ENCODE measurements at regions of chr7 and their contacts with region 1.

Region 1: DNA sequence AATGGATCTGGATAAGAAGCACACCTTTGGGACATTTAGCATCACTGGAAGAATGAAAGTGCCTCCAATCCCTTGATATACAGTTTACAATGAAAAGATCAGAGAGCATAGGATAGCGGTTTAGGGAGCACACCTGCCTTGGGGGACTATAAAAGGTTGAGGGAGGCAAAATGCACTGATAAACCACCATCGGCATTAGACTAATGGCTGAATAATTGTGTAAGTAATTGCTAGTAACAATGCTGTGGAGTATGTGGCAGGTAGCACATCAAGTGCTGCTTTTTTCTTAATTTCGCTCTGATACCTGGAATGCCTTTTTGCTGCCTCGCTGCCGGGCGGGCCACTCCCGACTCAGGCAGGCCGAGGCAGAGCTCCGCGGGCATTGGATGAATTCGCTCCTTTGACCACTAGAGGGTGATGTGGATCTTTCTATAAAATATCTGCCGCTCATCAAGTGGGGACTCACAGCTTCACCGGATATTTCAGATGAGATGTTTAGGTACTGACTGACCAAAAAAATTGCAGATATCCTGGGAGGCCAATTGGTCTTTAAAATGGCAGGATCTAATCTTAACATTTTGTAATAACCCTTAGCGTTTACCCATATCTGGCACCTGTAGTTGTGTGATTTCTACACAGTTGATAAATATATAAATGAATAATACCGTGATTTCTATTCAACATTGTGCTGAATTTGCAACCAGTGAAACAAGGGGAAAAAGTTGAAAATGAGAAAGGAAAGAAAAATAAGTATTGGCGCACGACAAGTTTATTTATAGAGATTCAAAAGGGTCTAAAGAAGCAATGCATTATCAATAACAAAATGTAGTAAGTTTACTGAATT is 116.8 kb upstream of the PRSS1 start:
- DNase-seq: peak; percentile 71
- ATAC-seq: peak; percentile 98
- H3K4me3 Mint-ChIP-seq: no peak overlapping the region
- H3K27ac Mint-ChIP-seq: no peak overlapping the region
- H3K4me1 Mint-ChIP-seq: peaks cover 2% of the 10 kb centered on the region; the same call in 1 of the 2 replicates
- H3K27me3 Mint-ChIP-seq: peaks cover 13% of the 10 kb centered on the region
- CTCF ChIP-seq: peak; percentile 63

Region 2: DNA sequence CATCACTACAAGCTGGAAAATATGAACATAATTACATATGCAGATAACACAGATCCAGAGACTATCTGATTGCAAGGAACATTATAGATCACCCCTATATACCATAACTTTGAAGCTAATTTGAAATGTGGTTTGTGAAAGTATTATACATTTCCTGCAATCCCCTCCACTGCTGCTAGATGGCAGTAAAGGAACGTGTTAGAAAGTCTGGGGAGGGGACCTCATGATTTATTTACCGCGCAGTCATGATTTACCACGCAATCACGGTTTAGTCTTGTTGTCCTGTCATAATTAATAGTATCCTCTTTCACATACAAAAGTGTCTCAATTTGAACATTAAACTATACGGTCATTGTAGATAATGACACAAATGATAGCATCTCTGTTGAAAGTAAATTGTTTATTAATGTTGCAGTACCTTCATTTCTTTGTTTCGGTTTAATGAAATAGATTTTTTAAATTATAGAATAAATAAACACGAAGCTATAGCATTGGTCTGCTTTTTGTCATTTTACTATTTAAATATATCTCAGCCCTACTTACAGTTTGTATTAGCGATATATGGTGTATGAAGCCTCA is 28.6 kb before region 1 on chr7:
- CTCF ChIA-PET with region 1: interaction called, 13 read pairs
- POLR2A ChIA-PET with region 1: no interaction called
- DNase-seq: peak; percentile 60
- ATAC-seq: peak; percentile 55
- H3K4me3 Mint-ChIP-seq: no peak overlapping the region
- H3K27ac Mint-ChIP-seq: no peak overlapping the region
- H3K4me1 Mint-ChIP-seq: 0 out of 2 replicates have a peak, but pooled peaks cover 2% of the 10 kb centered on the region
- H3K27me3 Mint-ChIP-seq: no peaks in the 10 kb centered on the region; the same call in 1 of the 2 replicates
- CTCF ChIP-seq: peak; percentile 42; the same call in 1 of the 2 replicates

Region 3: DNA sequence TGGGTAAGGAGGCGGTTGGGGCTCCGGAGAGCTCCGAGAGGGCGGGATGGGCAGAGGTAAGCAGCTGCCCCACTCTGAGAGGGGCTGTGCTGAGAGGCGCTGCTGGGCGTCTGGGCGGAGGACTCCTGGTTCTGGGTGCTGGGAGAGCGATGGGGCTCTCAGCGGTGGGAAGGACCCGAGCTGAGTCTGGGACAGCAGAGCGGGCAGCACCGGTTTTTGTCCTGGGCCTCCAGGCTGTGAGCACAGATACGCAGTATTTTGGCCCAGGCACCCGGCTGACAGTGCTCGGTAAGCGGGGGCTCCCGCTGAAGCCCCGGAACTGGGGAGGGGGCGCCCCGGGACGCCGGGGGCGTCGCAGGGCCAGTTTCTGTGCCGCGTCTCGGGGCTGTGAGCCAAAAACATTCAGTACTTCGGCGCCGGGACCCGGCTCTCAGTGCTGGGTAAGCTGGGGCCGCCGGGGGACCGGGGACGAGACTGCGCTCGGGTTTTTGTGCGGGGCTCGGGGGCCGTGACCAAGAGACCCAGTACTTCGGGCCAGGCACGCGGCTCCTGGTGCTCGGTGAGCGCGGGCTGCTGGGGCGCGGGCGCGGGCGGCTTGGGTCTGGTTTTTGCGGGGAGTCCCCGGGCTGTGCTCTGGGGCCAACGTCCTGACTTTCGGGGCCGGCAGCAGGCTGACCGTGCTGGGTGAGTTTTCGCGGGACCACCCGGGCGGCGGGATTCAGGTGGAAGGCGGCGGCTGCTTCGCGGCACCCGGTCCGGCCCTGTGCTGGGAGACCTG is 164.3 kb after region 1 on chr7:
- CTCF ChIA-PET with region 1: interaction called, 10 read pairs
- POLR2A ChIA-PET with region 1: interaction called, 3 read pairs
- DNase-seq: peak; percentile 36
- ATAC-seq: peak; percentile 38
- H3K4me3 Mint-ChIP-seq: peak overlapping the region; percentile 86
- H3K27ac Mint-ChIP-seq: no peak overlapping the region
- H3K4me1 Mint-ChIP-seq: peaks cover 56% of the 10 kb centered on the region
- H3K27me3 Mint-ChIP-seq: peaks cover 82% of the 10 kb centered on the region
- CTCF ChIP-seq: no peak

Region 4: DNA sequence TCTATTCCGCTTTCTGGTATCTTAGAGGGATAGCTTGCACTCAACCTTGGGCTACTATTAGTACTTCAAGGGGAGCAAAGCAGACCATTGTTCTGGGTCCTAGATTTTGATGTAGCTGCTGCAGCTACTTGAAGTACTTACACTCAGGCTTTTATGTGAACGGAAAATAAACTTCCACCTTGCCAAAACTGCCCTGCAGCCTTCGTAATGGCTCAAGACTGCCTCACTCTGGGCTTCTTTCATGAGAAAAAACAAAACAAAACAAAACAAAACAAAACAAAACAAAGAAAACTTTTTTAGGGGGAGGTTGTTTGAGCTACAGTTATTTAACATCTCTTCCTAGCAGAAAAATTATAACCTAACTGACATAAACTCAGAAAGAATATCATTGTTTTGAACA is 203.0 kb after region 1 on chr7:
- CTCF ChIA-PET with region 1: interaction called, 17 read pairs
- POLR2A ChIA-PET with region 1: no interaction called
- DNase-seq: no peak
- ATAC-seq: peak; percentile 77
- H3K4me3 Mint-ChIP-seq: no peak overlapping the region
- H3K27ac Mint-ChIP-seq: peak overlapping the region; percentile 24; the same call in 1 of the 2 replicates
- H3K4me1 Mint-ChIP-seq: peaks cover 10% of the 10 kb centered on the region
- H3K27me3 Mint-ChIP-seq: no peaks in the 10 kb centered on the region
- CTCF ChIP-seq: no peak

Region 5: GRCh38 chr7:142866361-142867058 is 234.0 kb after region 1 on chr7:
- CTCF ChIA-PET with region 1: interaction called, 12 read pairs
- POLR2A ChIA-PET with region 1: no interaction called
- DNase-seq: peak; percentile 80
- ATAC-seq: peak; percentile 92
- H3K4me3 Mint-ChIP-seq: no peak overlapping the region
- H3K27ac Mint-ChIP-seq: no peak overlapping the region
- H3K4me1 Mint-ChIP-seq: peaks cover 39% of the 10 kb centered on the region
- H3K27me3 Mint-ChIP-seq: no peaks in the 10 kb centered on the region; the same call in none of the 2 replicates
- CTCF ChIP-seq: peak; percentile 39; the same call in 1 of the 2 replicates

Measured in WTC11 (cell line).